AG04449 (cell line): ENCODE measurements at regions of chr7 and their contacts with region 1.

Region 1: GRCh38 chr7:113790025-113790424 is 128.8 kb downstream of the PPP1R3A start:
- DNase-seq: no peak
- H3K4me3 ChIP-seq: no peak overlapping the region
- CTCF ChIP-seq: no peak

Region 2: DNA sequence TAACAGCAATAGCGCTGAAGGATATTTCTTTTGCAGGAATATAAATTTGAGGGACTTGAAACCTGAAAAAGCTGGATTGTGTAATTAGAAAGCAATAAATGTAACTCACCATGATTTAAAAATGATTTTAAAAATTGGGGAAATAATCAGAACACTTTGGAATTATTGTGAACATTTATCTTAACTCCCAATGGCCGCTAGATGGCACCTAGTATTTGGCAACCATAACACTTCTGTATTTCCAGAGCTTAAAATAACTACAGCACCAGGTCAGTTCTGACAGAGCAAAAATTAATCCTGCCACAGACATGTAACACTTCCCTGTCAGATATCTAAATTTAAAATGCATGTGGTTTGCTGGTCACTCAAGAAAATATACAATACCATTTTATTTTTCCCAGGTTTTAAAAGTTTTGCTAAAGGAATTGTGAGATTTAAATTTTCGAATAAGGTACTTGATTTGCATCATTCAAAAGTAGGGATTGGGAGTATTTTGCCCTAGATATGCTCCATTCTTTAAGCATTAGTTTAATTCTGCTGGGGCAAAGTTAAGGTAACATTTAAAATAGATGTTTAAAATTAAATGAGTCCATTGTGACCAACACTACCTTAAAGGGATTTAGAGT is 15.7 kb before region 1 on chr7:
- CTCF ChIA-PET with region 1: interaction called, 16 read pairs
- POLR2A ChIA-PET with region 1: no interaction called
- DNase-seq: peak; percentile 9
- H3K4me3 ChIP-seq: no peak overlapping the region
- CTCF ChIP-seq: peak; percentile 47

Region 3: DNA sequence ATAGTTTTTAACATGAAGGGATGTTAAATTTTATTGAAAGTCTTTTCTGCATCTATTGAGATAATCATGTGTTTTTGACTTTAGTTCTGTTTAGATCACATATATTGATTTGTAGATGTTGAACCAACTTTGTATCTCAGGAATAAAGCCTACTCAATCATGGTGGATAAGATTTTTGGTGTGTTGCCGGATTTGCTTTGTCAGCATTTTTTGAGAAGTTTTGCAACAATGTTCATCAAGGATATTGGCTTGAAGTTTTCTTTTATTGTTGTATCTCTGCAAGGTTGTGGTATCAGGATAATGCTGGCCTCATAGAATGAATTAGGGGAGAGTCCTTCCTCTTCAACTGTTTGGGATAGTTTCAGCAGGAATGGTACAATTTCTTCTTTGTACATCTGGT is 138.1 kb after region 1 on chr7:
- CTCF ChIA-PET with region 1: no interaction called
- POLR2A ChIA-PET with region 1: no interaction called
- DNase-seq: no peak
- H3K4me3 ChIP-seq: no peak overlapping the region
- CTCF ChIP-seq: no peak